ENCODE measurements at regions of chr7 and their contacts with region 1.

Region 1: GRCh38 chr7:112395411-112395810 is 54.8 kb upstream of the IFRD1 start:
- DNase-seq: no peak
- H3K4me3 ChIP-seq: no peak overlapping the region
- H3K27ac ChIP-seq: no peak overlapping the region
- H3K4me1 ChIP-seq: peaks cover 5% of the 10 kb centered on the region
- H3K27me3 ChIP-seq: no peaks in the 10 kb centered on the region
- CTCF ChIP-seq: no peak
- POLR2A ChIP-seq: no peak

Region 2: GRCh38 chr7:111750144-111750715 is 645.2 kb before region 1 on chr7:
- intact Hi-C with region 1: loop called (anchors 2 kb)
- DNase-seq: no peak
- H3K4me3 ChIP-seq: no peak overlapping the region
- H3K27ac ChIP-seq: no peak overlapping the region
- H3K4me1 ChIP-seq: no peaks in the 10 kb centered on the region
- H3K27me3 ChIP-seq: no peaks in the 10 kb centered on the region
- CTCF ChIP-seq: no peak
- POLR2A ChIP-seq: no peak